ENCODE measurements at regions of chr1 and their contacts with region 1.

Region 1: GRCh38 chr1:31970873-31971272 is 32.7 kb upstream of the PTP4A2 start:
- DNase-seq: no peak
- ATAC-seq: no peak
- H3K4me3 Mint-ChIP-seq: no peak overlapping the region
- H3K27ac Mint-ChIP-seq: no peak overlapping the region
- H3K4me1 Mint-ChIP-seq: no peaks in the 10 kb centered on the region
- H3K27me3 Mint-ChIP-seq: no peaks in the 10 kb centered on the region
- CTCF ChIP-seq: no peak

Region 2: GRCh38 chr1:31372961-31373896 is 597.6 kb before region 1 on chr1 and contains the start of gene FABP3:
- CTCF ChIA-PET with region 1: no interaction called
- POLR2A ChIA-PET with region 1: interaction called, 10 read pairs
- intact Hi-C with region 1: no loop called
- DNase-seq: no peak
- ATAC-seq: peak; percentile 50
- H3K4me3 Mint-ChIP-seq: peak within 1 kb of the TSS; percentile 76
- H3K27ac Mint-ChIP-seq: no peak within 1 kb of the TSS
- H3K4me1 Mint-ChIP-seq: peaks cover 15% of the 10 kb centered on the region
- H3K27me3 Mint-ChIP-seq: peaks cover 4% of the 10 kb centered on the region
- CTCF ChIP-seq: no peak
- total RNA-seq, gene FABP3: 0.49 TPM in 1 of 2 replicates, not detected in the other

Measured in activated B cell treated with CpG ODN at 0.5 μM for 24 hours (primary cell).